ENCODE measurements at regions of chr2 and their contacts with region 1.

Region 1: DNA sequence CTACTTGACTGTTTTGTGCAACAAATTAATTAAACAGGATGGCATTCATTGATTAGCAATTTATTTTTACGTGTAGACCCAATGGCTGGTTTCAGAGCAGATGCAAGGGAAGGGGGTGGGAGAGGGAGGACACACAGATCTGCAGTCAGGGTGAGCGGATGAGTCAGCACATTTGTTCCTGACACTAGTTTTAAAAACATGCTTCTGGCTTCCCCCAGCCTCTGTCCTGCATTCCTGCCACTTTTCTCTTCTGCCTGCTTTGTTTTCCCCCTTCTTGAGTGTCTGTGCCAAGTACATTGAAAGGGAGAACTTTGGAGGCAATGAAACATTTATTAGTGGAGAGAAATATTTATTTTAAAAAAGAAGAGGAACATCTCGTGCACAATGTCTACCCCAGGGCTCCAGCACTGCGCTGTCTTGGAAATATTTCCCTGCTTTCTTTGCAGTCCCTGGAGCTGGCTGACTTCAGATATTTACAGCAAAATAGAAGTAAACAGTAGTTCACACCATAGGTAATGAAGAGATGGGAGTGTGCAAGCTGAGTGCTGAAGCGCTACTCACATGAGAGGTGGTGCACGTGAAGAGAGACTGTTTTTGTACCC is 52.2 kb downstream of the NRP2 start:
- DNase-seq: peak; percentile 90
- ATAC-seq: peak; percentile 70
- H3K4me3 ChIP-seq: no peak overlapping the region
- H3K27ac ChIP-seq: peak overlapping the region; percentile 75; the same call in 1 of the 2 replicates
- H3K4me1 ChIP-seq: peaks cover 33% of the 10 kb centered on the region
- H3K27me3 ChIP-seq: no peaks in the 10 kb centered on the region
- CTCF ChIP-seq: no peak
- POLR2A ChIP-seq: no peak
- RAD21 ChIP-seq: no peak

Region 2: GRCh38 chr2:205754924-205755321 is 20.4 kb after region 1 on chr2:
- CTCF ChIA-PET with region 1: interaction called, 5 read pairs
- POLR2A ChIA-PET with region 1: no interaction called
- dilution Hi-C with region 1: no loop called
- in situ Hi-C with region 1: no loop called
- intact Hi-C with region 1: loop called (anchors 2 kb)
- DNase-seq: peak; percentile 30
- ATAC-seq: peak; percentile 8; the same call in 1 of the 2 replicates
- H3K4me3 ChIP-seq: no peak overlapping the region
- H3K27ac ChIP-seq: no peak overlapping the region; the same call in 1 of the 2 replicates
- H3K4me1 ChIP-seq: peaks cover 29% of the 10 kb centered on the region
- H3K27me3 ChIP-seq: no peaks in the 10 kb centered on the region
- CTCF ChIP-seq: no peak
- POLR2A ChIP-seq: no peak
- RAD21 ChIP-seq: no peak